HepG2 (cell line): ENCODE measurements at regions of chr14 and their contacts with region 1.

Region 1: GRCh38 chr14:32576088-32576795 is 247.1 kb downstream of the AKAP6 start:
- DNase-seq: peak; percentile 73
- ATAC-seq: peak; percentile 93
- H3K4me3 ChIP-seq: no peak overlapping the region
- H3K27ac ChIP-seq: no peak overlapping the region
- H3K4me1 ChIP-seq: peaks cover 11% of the 10 kb centered on the region
- H3K27me3 ChIP-seq: no peaks in the 10 kb centered on the region
- CTCF ChIP-seq: peak; percentile 92
- EP300 ChIP-seq: no peak
- POLR2A ChIP-seq: no peak
- RAD21 ChIP-seq: peak; percentile 84; the same call in 1 of the 2 replicates

Region 2: DNA sequence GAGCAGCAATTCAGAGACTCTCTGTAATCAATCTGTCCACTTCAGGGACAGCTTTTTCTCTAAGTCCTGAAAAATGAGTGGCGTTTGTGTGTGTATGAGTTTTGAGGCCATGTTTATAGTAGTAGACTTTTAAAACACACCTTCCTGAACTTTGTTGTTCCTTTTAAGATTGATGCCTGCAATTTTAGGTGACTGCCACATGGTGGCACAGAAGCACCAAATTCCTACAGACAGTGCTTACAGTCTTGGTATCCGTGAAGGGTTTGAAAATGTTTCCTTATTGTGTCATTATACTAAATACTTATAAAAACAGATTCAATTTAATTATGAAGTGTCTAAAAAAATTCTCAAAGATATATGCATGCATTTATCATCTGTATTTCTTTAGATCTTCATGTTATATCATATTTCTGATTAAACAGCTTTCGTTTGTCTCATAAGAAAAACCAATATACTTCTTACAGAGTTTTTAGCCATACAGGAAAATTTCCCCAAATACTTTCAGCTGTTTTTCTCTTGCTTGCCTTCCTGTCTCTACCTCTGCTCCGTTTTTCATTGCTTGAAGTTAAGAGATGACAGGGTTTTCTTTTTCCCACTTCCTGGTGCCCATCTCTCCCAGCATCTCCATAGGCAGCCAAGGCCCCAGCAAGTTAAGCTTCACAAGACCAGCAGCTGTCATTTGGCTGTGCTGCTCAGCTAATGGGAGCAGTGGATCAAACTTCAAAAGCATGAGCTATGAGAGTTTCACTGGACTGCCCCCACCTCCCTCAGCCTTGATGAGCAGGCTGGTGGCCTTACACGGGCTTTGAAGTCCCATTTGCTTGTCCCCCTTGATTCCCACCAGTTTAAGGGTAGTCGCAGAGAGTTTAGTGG is 12.4 kb after region 1 on chr14:
- CTCF ChIA-PET with region 1: no interaction called
- POLR2A ChIA-PET with region 1: no interaction called
- in situ Hi-C with region 1: no loop called
- intact Hi-C with region 1: no loop called
- DNase-seq: peak; percentile 43
- ATAC-seq: peak; percentile 79
- H3K4me3 ChIP-seq: no peak overlapping the region
- H3K27ac ChIP-seq: no peak overlapping the region
- H3K4me1 ChIP-seq: no peaks in the 10 kb centered on the region
- H3K27me3 ChIP-seq: no peaks in the 10 kb centered on the region
- CTCF ChIP-seq: peak; percentile 88
- EP300 ChIP-seq: no peak
- POLR2A ChIP-seq: no peak
- RAD21 ChIP-seq: no peak; the same call in 1 of the 2 replicates

Region 3: DNA sequence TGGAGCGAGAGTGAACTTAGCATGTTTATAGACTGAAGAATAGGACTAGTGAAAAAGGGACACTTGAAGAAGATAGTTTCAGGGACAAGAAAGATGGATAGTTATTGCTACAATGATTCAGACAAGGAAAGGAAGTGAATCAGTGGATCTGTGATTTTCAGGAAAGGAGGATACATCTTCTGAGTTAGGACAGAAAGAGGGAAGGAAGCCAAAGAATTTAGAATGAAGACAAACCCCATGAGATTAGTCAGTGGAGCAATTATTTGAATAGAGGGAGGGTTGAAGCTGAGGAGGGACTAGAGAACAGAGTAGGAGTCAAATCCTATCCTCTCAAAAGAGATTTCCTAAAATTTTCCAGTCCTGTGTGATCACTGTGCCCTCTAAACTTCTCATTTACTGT is 35.5 kb after region 1 on chr14:
- CTCF ChIA-PET with region 1: no interaction called
- POLR2A ChIA-PET with region 1: no interaction called
- in situ Hi-C with region 1: no loop called
- intact Hi-C with region 1: no loop called
- DNase-seq: no peak
- ATAC-seq: no peak
- H3K4me3 ChIP-seq: no peak overlapping the region
- H3K27ac ChIP-seq: no peak overlapping the region
- H3K4me1 ChIP-seq: no peaks in the 10 kb centered on the region
- H3K27me3 ChIP-seq: no peaks in the 10 kb centered on the region
- CTCF ChIP-seq: no peak
- EP300 ChIP-seq: no peak
- POLR2A ChIP-seq: no peak
- RAD21 ChIP-seq: no peak

Region 4: DNA sequence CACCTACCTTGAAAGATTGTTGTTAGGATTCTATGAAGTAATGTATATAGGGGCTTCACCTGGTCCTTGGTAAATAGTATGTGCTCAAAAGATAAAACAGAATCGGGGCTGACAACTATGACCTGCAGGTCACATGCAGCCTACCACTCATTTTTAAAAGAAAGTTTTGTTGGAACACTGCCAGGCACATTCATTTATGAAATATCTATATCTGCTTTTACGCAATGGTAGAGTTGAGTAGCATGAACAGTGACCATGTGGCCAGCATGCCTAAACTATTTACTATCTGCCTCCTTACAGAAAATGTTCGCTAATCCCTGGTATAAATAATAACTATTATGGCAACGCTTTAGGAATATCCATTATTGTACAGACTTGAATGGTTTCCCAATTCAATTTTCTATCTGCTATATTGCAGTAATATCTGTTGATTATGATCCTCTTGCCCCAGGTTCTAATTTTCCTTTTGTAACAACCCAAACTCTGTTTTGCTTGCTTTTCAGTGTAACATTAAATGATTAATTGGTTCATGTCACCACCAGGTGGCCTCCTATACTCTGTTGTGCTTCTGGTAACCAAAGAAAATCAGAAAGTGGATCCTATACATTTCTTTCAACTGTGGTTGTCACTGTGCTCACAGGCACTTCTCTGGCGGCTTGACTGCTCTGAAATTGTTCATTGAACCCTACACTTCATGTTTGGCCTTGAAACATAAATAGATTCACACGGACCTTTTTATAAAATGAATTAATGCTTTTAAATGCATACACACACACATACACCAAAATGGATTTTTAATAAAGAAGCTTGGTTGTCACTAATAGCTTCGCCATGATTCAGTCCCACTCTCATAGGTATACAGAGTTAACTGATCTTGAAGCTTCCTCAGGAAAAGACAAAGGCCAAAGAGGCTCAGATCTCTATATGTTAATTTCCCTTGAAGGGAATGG is 134.8 kb after region 1 on chr14:
- CTCF ChIA-PET with region 1: interaction called, 3 read pairs
- POLR2A ChIA-PET with region 1: no interaction called
- in situ Hi-C with region 1: no loop called
- intact Hi-C with region 1: loop called (anchors 5 kb)
- DNase-seq: peak; percentile 62
- ATAC-seq: peak; percentile 94
- H3K4me3 ChIP-seq: no peak overlapping the region
- H3K27ac ChIP-seq: no peak overlapping the region
- H3K4me1 ChIP-seq: no peaks in the 10 kb centered on the region
- H3K27me3 ChIP-seq: no peaks in the 10 kb centered on the region
- CTCF ChIP-seq: peak; percentile 79
- EP300 ChIP-seq: no peak
- POLR2A ChIP-seq: no peak
- RAD21 ChIP-seq: no peak

Region 5: DNA sequence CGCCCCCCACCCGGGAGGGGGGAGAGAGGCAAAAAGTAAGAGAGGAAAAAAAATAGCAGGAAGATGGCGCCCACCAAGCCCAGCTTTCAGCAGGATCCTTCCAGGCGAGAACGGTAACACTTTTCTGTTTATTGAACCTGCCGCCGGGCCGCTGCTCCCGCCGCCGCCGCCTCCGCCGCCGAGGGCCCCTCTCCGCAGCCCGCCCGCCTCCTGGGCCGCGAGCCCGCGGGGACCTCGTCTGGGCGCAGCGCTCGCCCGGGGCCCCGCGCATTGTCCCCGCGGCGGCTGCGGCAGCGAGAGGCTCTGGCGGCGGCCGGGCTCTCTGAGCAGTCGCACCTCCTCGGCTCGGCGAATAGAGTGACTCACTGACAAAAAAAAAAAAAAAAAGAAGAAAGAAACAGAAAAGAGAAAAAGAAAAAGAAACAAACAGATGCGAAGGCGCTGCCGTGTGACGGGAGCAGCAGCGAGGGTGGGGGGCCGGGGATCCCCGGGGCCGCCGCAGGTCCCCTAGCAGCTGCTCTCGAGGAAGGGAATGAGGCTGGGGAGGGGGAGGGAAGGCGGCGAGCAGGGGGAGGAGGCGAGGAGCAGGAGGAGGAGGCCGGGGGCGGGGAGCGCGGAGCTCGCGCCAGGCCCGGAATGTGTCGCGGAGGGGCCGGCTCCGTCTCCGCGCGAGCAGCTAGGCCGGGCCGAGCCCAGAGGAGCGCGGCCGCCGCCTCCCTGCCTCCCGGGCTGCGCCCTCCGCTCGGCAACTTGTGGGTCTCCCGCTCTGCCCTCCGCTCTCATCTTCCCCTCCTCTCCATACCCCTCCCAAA is 363.2 kb after region 1 on chr14:
- CTCF ChIA-PET with region 1: no interaction called
- POLR2A ChIA-PET with region 1: no interaction called
- in situ Hi-C with region 1: no loop called
- intact Hi-C with region 1: no loop called
- DNase-seq: no peak
- ATAC-seq: peak; percentile 77
- H3K4me3 ChIP-seq: peak overlapping the region; percentile 42 to 60 (median 53); a peak in 5 of 6 replicates
- H3K27ac ChIP-seq: no peak overlapping the region
- H3K4me1 ChIP-seq: no peaks in the 10 kb centered on the region
- H3K27me3 ChIP-seq: peaks cover 13 to 61% of the 10 kb centered on the region in 2 experiments
- CTCF ChIP-seq: no peak
- EP300 ChIP-seq: no peak
- POLR2A ChIP-seq: no peak
- RAD21 ChIP-seq: no peak

Region 6: DNA sequence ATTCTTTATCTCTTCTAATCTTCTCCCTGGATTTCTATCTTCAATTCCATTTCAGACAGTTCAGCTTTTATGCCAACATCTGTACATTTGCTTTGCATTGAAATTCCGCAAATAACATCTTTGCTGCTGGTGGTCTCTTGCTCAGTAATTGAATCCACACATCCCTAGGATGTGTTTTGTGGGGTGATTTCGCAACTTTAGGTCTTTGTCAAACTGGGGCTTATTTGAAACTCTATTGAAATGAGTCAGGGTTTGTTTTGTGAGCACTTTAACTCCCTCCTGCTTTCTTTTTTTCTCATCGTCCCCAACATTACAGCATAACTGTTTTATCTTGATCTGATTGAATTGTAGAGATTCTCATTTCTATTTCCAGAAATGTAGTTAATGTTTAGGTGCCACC is 766.8 kb after region 1 on chr14:
- CTCF ChIA-PET with region 1: no interaction called
- POLR2A ChIA-PET with region 1: no interaction called
- in situ Hi-C with region 1: no loop called
- intact Hi-C with region 1: loop called (anchors 5 kb)
- DNase-seq: no peak
- ATAC-seq: no peak
- H3K4me3 ChIP-seq: no peak overlapping the region
- H3K27ac ChIP-seq: no peak overlapping the region
- H3K4me1 ChIP-seq: no peaks in the 10 kb centered on the region
- H3K27me3 ChIP-seq: no peaks in the 10 kb centered on the region
- CTCF ChIP-seq: no peak
- EP300 ChIP-seq: no peak
- POLR2A ChIP-seq: no peak
- RAD21 ChIP-seq: no peak

Region 7: DNA sequence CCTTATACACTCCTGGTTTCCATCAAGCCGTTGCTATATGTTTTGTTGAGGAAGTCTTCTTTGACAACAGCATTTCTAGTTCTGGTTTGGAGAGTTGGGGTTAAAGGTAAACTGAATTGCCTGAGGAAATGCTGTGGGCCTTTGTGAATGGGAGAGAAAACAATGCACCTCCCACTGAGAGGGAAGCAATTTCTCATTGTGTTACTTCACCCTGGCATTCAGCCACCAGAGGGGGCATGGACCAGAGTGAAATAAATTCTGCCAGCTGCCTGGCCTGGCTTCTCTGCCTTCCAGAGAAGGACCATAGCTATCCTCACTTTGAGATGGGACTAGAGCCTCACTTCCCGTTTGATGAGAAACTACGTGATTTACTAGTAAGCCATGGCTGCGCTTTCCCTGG is 899.4 kb after region 1 on chr14:
- CTCF ChIA-PET with region 1: no interaction called
- POLR2A ChIA-PET with region 1: no interaction called
- in situ Hi-C with region 1: no loop called
- intact Hi-C with region 1: loop called (anchors 5 kb)
- DNase-seq: peak; percentile 58
- ATAC-seq: peak; percentile 94
- H3K4me3 ChIP-seq: no peak overlapping the region
- H3K27ac ChIP-seq: no peak overlapping the region
- H3K4me1 ChIP-seq: no peaks in the 10 kb centered on the region
- H3K27me3 ChIP-seq: no peaks in the 10 kb centered on the region
- CTCF ChIP-seq: peak; percentile 70
- EP300 ChIP-seq: no peak
- POLR2A ChIP-seq: no peak
- RAD21 ChIP-seq: no peak; the same call in 1 of the 2 replicates

Region 8: DNA sequence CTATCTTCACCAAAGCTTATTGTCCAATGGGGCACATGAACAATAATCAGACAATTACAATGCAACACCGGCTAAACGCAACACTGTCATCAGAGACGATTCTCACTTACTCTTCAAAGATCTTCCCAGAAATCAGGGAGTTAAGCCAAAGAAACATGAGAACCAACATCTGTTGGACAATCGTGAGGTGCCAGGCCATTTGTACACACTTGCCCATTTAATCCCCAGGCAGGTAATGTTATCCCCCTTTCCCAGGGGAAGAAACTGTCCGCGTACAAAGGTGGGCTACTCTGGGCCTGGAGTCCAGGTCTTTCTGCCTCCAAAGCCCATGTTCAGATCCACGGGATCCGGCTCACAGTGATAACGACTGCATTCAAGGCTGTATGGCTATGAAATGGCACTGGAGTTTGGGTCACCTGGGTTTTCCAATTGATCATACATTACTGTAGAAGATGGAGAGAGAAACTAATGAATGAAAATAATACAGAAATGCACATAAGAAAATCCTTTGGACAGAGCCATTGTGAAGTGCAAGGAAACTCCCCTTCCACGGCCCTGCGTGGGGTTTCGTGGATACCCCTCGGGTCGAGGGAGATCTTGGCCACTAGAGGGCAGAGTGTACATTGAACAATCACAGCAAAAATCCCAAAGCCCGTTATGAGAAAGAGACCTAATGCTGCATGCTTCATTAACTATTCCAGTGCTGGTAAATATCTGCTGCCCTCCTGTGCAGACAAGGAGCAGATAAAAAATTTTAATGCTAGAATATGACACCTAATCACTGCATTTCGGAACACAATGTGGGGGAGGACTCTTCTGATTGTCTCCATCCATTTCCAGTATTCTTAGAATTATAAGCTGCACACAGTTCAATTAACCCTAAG is 1263.2 kb after region 1 on chr14:
- CTCF ChIA-PET with region 1: interaction called, 4 read pairs
- POLR2A ChIA-PET with region 1: no interaction called
- in situ Hi-C with region 1: no loop called
- intact Hi-C with region 1: loop called (anchors 1 kb)
- DNase-seq: peak; percentile 58
- ATAC-seq: peak; percentile 85
- H3K4me3 ChIP-seq: no peak overlapping the region
- H3K27ac ChIP-seq: no peak overlapping the region
- H3K4me1 ChIP-seq: no peaks in the 10 kb centered on the region
- H3K27me3 ChIP-seq: peaks cover 5 to 26% of the 10 kb centered on the region in 2 experiments; a peak in 3 of 5 replicates
- CTCF ChIP-seq: peak; percentile 96
- EP300 ChIP-seq: no peak
- POLR2A ChIP-seq: no peak
- RAD21 ChIP-seq: peak; percentile 87

Region 9: DNA sequence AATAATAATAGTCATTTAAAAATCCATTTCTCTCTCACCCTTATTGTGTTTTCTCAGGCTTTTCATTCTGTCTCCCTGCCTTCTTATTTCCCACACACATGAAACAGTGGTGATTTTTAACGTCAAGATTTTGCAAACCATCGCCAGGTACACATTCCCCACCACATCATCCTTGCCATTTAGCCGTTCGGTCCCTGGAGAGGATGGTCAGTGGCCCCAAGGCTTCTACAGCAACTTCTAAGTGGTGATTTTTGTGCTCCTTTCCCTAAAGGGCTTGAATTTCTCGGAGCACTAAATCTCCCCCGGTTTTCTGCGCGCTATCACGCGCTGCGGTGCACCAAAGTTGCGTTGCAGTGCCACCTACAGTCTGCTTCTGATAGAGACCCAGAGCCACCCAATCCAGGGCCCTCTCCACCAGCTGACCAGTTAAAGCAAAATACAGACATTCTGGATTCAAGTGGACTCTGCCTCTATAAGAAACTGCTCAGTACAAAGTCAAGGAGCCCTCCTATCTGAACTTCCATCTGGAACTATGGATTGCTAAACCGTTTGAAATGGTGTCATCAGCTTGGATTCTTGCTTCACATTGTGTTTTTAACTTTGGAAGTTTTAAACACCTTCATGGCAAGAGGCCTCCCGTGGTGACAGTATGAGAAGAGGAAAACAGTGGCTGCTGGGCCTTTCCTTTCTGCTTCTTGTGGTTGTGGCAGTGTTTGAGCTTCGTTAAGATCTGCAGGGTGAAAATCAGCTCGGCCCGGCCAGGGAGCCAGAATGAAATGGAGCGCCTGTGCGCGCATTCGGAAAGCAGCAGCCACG is 1651.8 kb after region 1 on chr14:
- CTCF ChIA-PET with region 1: interaction called, 6 read pairs
- POLR2A ChIA-PET with region 1: no interaction called
- in situ Hi-C with region 1: no loop called
- intact Hi-C with region 1: loop called (anchors 1 kb)
- DNase-seq: peak; percentile 72
- ATAC-seq: peak; percentile 99
- H3K4me3 ChIP-seq: no peak overlapping the region
- H3K27ac ChIP-seq: no peak overlapping the region
- H3K4me1 ChIP-seq: peaks cover 8% of the 10 kb centered on the region; the same call in 1 of the 2 replicates
- H3K27me3 ChIP-seq: peaks cover 0 to 5% of the 10 kb centered on the region in 2 experiments; a peak in 1 of 5 replicates
- CTCF ChIP-seq: peak; percentile 98
- EP300 ChIP-seq: no peak
- POLR2A ChIP-seq: no peak
- RAD21 ChIP-seq: peak; percentile 97

Region 10: GRCh38 chr14:34322940-34323418 is 1746.7 kb after region 1 on chr14:
- CTCF ChIA-PET with region 1: interaction called, 25 read pairs
- POLR2A ChIA-PET with region 1: no interaction called
- in situ Hi-C with region 1: loop called (anchors 10 kb)
- intact Hi-C with region 1: loop called (anchors 1 kb)
- DNase-seq: peak; percentile 87
- ATAC-seq: peak; percentile 87
- H3K4me3 ChIP-seq: no peak overlapping the region
- H3K27ac ChIP-seq: no peak overlapping the region
- H3K4me1 ChIP-seq: 0 out of 2 replicates have a peak, but pooled peaks cover 6% of the 10 kb centered on the region
- H3K27me3 ChIP-seq: no peaks in the 10 kb centered on the region
- CTCF ChIP-seq: peak; percentile 89
- EP300 ChIP-seq: no peak
- POLR2A ChIP-seq: no peak
- RAD21 ChIP-seq: peak; percentile 41; the same call in 1 of the 2 replicates